Endothelial cell of umbilical vein (primary cell): ENCODE measurements at regions of chrX and their contacts with region 1.

Region 1: DNA sequence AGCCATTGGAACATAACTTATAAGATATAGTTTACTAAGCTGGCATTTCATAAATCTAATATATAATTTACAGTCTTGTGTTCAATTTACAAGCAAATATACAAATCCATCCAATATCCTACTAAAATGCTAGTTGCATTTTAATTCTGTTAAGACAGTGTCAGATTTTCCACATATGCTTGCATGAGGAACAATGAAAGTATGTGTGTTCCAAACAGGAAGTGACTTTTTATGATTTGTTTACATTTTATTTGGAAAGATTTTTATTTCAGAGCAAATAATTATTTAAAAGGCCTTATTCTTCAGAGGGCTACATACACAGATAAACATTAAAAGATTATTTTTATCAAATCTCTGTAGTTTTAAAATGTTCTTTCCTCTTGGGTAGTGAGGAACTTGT is 130.1 kb downstream of the KLHL34 start:
- DNase-seq: peak; percentile 53
- H3K4me3 ChIP-seq: no peak overlapping the region
- H3K27ac ChIP-seq: peak overlapping the region; percentile 63
- H3K4me1 ChIP-seq: peaks cover 32% of the 10 kb centered on the region
- H3K27me3 ChIP-seq: no peaks in the 10 kb centered on the region
- CTCF ChIP-seq: no peak
- POLR2A ChIP-seq: no peak

Region 2: DNA sequence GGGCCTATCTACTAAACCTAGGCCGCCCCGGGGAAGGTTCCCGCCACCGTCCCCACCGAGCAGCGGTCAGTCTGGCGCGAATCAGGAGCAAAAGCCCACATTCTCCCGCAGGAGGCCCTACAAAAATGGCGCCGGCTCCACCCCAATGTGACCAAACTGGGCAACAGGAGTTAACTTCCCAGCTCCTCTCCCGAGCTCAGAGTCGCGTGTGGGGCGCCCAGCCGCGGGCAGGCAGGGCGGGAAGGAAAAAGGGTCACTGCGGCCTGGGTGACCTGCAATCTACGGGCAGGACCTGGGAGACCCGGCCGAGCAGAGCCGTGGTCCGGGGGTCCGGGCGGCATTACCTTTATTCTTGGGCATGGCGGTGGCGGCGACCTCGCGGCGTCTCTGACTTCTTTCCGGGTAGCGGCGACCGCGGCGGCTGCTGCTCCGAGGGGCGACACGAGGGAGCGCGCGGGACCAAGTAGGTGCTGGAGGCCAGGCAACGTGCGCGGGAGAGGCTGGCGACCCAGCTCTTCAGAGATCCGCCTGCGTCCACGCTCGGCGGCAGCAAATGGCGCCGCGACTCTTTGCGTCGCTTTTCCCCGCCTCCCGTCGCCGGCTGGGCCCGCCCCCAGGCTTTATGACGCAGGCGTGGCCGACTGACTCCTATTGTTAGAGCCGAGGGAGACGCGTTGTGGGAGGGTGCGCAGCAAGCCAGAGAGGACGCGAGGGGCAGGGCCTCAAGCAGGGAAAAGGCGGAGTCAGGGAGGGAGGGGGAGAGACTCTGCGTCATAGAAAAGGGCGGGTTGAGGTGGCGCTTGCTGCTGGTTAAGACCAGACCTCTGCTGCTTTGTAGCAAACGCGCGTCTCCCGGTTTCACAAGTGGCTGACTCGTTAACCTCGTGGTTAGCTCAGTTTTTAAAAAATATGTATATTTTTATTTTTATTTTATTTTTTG is 1386.5 kb before region 1 on chrX and contains the start of gene EIF1AX:
- CTCF ChIA-PET with region 1: no interaction called
- POLR2A ChIA-PET with region 1: no interaction called
- dilution Hi-C with region 1: no loop called
- intact Hi-C with region 1: loop called (anchors 5 kb)
- DNase-seq: peak; percentile 98
- H3K4me3 ChIP-seq: peak within 1 kb of the TSS; percentile 55 to 87 (median 69)
- H3K27ac ChIP-seq: peak within 1 kb of the TSS; percentile 56
- H3K4me1 ChIP-seq: peaks cover 22% of the 10 kb centered on the region
- H3K27me3 ChIP-seq: no peaks in the 10 kb centered on the region
- CTCF ChIP-seq: no peak
- POLR2A ChIP-seq: peak; percentile 46
- total RNA-seq, gene EIF1AX: 89.4 and 94.7 TPM in 2 replicates

Region 3: DNA sequence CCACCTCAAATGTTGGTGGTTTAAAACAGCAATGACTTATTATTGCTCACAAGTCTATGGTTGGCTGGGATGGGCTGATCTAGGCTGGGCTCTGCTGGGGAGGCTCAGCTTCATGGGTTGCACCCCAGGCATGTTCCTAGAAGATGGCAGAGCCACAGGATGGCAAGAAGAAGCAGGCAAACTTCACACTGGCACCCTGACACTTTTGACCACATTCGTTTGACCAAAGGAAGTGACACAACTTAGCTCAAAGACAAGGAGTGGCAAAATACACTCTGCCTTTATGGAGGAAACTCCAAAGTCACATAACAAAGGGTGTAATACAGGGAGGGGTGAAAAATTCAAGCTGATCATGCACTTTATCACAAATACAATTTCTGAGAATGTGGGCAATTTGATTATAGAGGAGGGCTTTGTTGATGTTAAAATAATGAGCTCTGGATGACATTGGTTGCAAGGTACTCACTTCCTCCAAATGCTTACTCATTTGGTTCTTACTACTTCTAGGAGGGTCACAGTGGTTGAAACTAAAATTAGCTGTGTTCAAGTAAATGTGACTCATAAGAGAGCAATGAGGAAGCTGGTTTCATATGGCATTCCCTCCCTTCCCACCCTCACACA is 1012.1 kb before region 1 on chrX:
- CTCF ChIA-PET with region 1: no interaction called
- POLR2A ChIA-PET with region 1: no interaction called
- dilution Hi-C with region 1: no loop called
- intact Hi-C with region 1: loop called (anchors 5 kb)
- DNase-seq: peak; percentile 72
- H3K4me3 ChIP-seq: no peak overlapping the region
- H3K27ac ChIP-seq: peak overlapping the region; percentile 71
- H3K4me1 ChIP-seq: peaks cover 53% of the 10 kb centered on the region
- H3K27me3 ChIP-seq: no peaks in the 10 kb centered on the region
- CTCF ChIP-seq: no peak
- POLR2A ChIP-seq: no peak

Region 4: DNA sequence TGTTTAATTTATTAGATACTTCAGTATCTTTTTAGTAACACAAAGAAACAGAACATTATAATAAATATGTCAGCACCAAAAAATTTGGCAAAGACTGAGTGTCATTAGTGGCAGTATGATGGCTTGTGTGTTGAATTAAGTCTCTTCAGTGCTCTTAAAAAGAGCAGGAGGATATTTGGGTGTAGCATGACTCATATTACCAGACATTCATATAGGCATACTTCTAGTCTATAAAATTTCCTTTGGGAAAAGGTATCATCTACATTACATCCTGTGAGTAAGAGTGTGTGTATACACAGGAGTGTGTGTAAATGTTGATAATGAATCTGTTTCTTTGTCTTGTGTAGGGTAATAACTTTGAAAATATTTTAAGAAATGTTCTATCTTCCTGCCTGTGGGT is 18.2 kb before region 1 on chrX:
- CTCF ChIA-PET with region 1: interaction called, 4 read pairs
- POLR2A ChIA-PET with region 1: no interaction called
- dilution Hi-C with region 1: no loop called
- intact Hi-C with region 1: loop called (anchors 1 kb)
- DNase-seq: peak; percentile 70
- H3K4me3 ChIP-seq: no peak overlapping the region
- H3K27ac ChIP-seq: no peak overlapping the region
- H3K4me1 ChIP-seq: peaks cover 22% of the 10 kb centered on the region
- H3K27me3 ChIP-seq: no peaks in the 10 kb centered on the region
- CTCF ChIP-seq: no peak
- POLR2A ChIP-seq: no peak

Region 5: GRCh38 chrX:22652596-22652995 is 1124.5 kb after region 1 on chrX:
- CTCF ChIA-PET with region 1: no interaction called
- POLR2A ChIA-PET with region 1: no interaction called
- dilution Hi-C with region 1: no loop called
- intact Hi-C with region 1: no loop called
- DNase-seq: no peak
- H3K4me3 ChIP-seq: no peak overlapping the region
- H3K27ac ChIP-seq: no peak overlapping the region
- H3K4me1 ChIP-seq: no peaks in the 10 kb centered on the region
- H3K27me3 ChIP-seq: no peaks in the 10 kb centered on the region
- CTCF ChIP-seq: no peak
- POLR2A ChIP-seq: no peak